GM10248 (cell line): ENCODE measurements at regions of chr19 and their contacts with region 1.

Region 1: DNA sequence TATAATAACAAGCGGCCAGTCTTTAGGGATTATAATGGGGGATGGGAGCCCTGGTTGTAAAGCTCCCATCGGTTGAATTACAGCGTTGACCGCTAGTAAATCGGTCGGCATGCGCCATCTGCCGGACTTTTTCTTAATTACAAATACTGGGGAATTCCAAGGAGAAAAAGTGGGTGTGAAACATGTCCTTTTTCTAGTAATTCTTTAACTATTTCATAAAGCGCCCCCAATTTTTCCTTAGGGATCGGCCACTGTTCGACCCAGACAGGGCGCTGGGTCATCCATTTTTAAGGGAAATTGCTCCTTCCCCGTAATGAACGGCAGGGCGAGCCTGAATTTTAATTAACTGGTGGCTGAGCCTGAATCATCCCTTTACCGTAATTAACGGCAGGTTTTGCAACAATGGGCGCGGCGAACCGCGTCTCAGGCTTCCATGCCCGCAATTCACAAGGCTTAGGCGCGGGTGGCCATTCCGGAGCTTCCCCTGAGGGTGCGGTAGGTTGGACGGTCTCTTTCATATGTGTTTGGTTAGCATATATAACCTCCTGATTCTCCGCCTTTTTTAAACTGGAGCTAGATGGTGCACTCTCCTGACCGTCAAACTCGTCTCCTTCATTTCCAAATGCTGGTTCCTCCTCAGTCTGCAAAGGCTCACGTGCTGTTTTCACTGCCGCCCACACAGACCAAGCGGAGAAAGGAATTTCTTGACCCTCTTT is 30.2 kb upstream of the EVI5L start:
- DNase-seq: peak; percentile 62
- CTCF ChIP-seq: peak; percentile 37

Region 2: GRCh38 chr19:7562646-7563393 is 237.0 kb before region 1 on chr19:
- CTCF ChIA-PET with region 1: interaction called, 49 read pairs
- POLR2A ChIA-PET with region 1: no interaction called
- DNase-seq: peak; percentile 11
- CTCF ChIP-seq: no peak

Region 3: DNA sequence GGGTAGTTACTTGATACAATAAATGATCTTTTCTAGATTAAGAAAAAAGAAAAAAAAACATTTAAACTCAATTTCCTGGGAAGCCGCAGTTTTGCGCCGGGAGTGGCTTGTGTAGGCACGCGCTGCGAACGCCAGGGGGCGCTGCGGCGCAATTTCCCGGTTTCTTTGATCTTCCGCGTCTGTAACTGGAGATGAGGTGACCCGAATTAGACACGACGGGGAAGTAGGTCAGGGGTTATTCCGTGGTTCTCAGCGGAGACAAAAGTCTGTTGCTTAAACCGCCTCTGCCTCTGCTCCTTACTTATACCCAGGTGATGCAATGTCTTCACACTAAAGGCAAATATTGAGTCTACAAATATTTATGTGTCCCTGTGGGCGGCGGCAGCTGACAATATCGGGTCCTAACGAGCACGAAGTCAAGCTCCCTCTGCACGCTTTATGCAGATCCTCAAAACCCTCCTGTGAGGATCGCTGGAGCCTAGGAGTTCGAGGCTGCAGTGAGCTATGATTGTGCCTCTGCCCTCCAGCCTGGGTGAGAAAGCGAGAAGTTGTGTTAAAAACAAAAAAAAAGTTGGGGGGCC is 147.6 kb before region 1 on chr19:
- CTCF ChIA-PET with region 1: interaction called, 27 read pairs
- POLR2A ChIA-PET with region 1: interaction called, 4 read pairs
- DNase-seq: peak; percentile 90
- CTCF ChIP-seq: peak; percentile 91

Region 4: GRCh38 chr19:7701654-7702457 is 97.9 kb before region 1 on chr19 and contains the start of gene FCER2:
- CTCF ChIA-PET with region 1: interaction called, 20 read pairs
- POLR2A ChIA-PET with region 1: interaction called, 3 read pairs
- DNase-seq: peak; percentile 75
- CTCF ChIP-seq: no peak

Region 5: GRCh38 chr19:7759156-7759555 is 40.6 kb before region 1 on chr19:
- CTCF ChIA-PET with region 1: no interaction called
- POLR2A ChIA-PET with region 1: no interaction called
- DNase-seq: no peak
- CTCF ChIP-seq: no peak

Region 6: DNA sequence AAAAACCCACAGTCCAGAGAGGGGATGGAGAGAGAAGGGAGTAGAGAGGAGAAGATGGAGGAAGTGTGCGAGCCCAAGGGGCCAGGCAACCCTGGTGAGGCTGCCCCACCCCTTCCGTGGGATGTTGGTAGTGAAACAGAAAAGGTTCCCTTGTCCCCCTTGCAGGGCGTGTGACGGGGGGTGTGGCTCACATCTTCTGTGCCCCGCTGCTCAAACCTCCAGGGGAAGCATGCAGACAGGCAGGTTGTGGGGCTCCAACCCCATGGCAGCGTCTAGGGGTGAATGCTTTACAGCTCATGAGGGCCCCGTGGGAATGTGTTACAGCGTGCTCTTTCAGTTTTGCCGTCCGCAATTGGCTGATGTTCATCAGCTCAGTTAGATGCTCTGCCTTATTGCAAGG is 15.5 kb after region 1 on chr19:
- CTCF ChIA-PET with region 1: interaction called, 31 read pairs
- POLR2A ChIA-PET with region 1: no interaction called
- DNase-seq: no peak
- CTCF ChIP-seq: no peak

Region 7: DNA sequence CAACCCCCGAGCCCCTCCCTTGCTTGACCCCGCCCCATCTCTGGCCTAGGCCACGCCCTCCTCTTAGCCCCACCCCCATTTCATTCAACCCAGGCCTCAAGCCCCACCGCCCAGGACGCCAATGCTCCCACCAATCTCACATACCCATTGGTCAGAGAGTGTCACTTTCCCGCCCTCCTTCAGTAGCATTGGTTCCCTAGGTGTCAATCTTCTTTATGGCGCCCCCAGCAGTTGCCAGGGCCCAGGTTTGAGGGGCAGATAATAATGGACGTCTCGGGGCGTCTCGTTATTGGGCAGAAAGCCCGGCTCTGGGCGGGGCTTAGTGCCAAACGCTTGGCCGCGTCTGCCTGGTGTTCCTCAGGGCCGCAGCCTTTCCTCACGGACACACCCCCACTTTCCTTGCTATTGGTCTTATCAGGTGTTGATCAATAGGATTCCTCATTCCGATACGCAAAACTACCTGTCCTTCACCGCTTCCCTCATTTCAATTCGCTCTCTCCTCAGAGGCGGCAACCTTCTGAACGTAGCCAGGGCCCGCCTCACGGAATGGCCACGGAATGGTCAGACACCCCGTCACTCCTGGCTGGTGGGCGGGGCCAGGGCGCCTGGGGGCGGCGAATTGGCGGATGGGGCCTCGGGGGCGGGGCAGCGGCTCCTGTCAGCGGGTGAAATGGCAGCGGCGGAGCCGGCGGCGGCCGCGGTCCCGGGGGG is 29.9 kb after region 1 on chr19 and contains the start of gene EVI5L:
- CTCF ChIA-PET with region 1: interaction called, 14 read pairs
- POLR2A ChIA-PET with region 1: no interaction called
- DNase-seq: peak; percentile 99
- CTCF ChIP-seq: peak; percentile 5